CD4-positive, alpha-beta T cell (primary cell): ENCODE measurements at regions of chr19 and their contacts with region 1.

Region 1: DNA sequence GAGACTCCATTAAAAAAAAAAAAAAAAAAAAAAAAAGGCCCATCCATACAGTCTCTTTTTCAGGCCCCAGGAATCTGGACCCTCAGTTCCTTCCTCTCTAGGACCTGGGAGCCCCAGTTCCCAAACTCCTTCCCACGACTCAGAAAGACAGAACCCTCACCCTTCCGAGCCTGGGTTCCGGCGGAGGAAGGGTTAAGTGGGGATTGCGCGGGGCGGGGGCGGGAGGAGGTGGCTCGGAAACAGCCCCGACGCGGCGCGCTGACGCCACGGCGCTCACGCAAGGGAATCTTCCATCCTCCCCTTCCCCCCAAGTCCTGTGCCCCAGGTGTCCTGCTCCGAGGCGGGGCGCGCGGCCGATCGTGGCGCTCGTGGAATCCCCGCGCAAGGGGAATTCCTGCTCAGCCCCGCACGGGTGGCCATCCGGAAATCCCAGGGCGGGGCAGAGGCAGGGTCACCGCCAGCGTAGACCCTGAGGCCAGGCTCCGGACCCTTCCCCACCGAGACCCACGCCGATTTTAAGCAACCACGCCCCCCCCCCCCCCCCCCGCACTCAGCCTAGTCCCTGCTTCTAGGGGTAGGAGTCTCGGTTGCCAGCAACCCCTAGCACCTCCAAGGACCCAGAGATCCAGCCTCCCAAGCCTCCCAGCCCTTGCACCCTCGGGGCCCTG is 659 bp downstream of the NFKBID start:
- DNase-seq: peak; percentile 68 to 97 (median 83)
- ATAC-seq: peak; percentile 54
- H3K4me3 ChIP-seq: peak overlapping the region; percentile 99
- H3K4me3 Mint-ChIP-seq: peak overlapping the region; percentile 98
- H3K27ac ChIP-seq: peak overlapping the region; percentile 100
- H3K27ac Mint-ChIP-seq: peak overlapping the region; percentile 92
- H3K4me1 ChIP-seq: peaks cover 77% of the 10 kb centered on the region
- H3K4me1 Mint-ChIP-seq: peaks cover 60% of the 10 kb centered on the region
- H3K27me3 ChIP-seq: no peaks in the 10 kb centered on the region
- H3K27me3 Mint-ChIP-seq: no peaks in the 10 kb centered on the region
- CTCF ChIP-seq: no peak

Region 2: GRCh38 chr19:35882114-35882832 is 17.4 kb before region 1 on chr19:
- CTCF ChIA-PET with region 1: interaction called, 5 read pairs
- POLR2A ChIA-PET with region 1: interaction called, 6 read pairs
- intact Hi-C with region 1: loop called (anchors 1 kb)
- DNase-seq: peak in 6 of 14 experiments; percentile 27 to 87 (median 72)
- ATAC-seq: peak; percentile 87
- H3K4me3 ChIP-seq: no peak overlapping the region
- H3K4me3 Mint-ChIP-seq: no peak overlapping the region
- H3K27ac ChIP-seq: no peak overlapping the region
- H3K27ac Mint-ChIP-seq: no peak overlapping the region
- H3K4me1 ChIP-seq: peaks cover 12% of the 10 kb centered on the region
- H3K4me1 Mint-ChIP-seq: peaks cover 14% of the 10 kb centered on the region
- H3K27me3 ChIP-seq: peaks cover 15 to 18% of the 10 kb centered on the region in 2 experiments
- H3K27me3 Mint-ChIP-seq: peaks cover 32% of the 10 kb centered on the region
- CTCF ChIP-seq: peak; percentile 77

Region 3: DNA sequence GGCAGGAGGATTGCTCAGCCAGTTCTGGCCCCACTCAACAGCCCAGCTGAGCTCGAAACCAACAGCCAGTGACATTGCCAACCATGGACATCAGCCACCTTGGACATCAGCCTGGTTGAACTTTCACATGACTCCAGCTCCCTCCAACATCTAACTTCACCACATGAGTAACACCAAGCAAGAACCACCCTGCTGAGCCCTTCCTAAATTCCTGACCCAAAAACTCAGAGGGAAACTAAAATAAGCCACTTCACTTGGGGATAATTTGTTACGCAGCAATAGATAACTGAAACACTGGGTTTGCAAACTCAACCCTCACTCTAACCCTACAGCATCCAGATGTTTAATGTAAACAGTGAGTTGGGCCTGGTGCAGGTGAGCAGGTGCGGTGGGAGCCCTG is 25.8 kb after region 1 on chr19:
- CTCF ChIA-PET with region 1: no interaction called
- POLR2A ChIA-PET with region 1: interaction called, 24 read pairs
- intact Hi-C with region 1: no loop called
- DNase-seq: no peak
- ATAC-seq: no peak
- H3K4me3 ChIP-seq: no peak overlapping the region
- H3K4me3 Mint-ChIP-seq: no peak overlapping the region
- H3K27ac ChIP-seq: no peak overlapping the region
- H3K27ac Mint-ChIP-seq: no peak overlapping the region
- H3K4me1 ChIP-seq: peaks cover 21% of the 10 kb centered on the region
- H3K4me1 Mint-ChIP-seq: peaks cover 14% of the 10 kb centered on the region
- H3K27me3 ChIP-seq: no peaks in the 10 kb centered on the region
- H3K27me3 Mint-ChIP-seq: no peaks in the 10 kb centered on the region
- CTCF ChIP-seq: no peak